ENCODE measurements at regions of chr1 and their contacts with region 1.

Region 1: GRCh38 chr1:203304919-203305808 is at the start of gene BTG2:
- DNase-seq: peak; percentile 84 to 97 (median 90)
- ATAC-seq: peak; percentile 78
- H3K4me3 ChIP-seq: peak within 1 kb of the TSS; percentile 73
- H3K4me3 Mint-ChIP-seq: peak within 1 kb of the TSS; percentile 95
- H3K27ac ChIP-seq: peak within 1 kb of the TSS; percentile 97 to 98
- H3K27ac Mint-ChIP-seq: peak within 1 kb of the TSS; percentile 98
- H3K4me1 ChIP-seq: peaks cover 54% of the 10 kb centered on the region
- H3K4me1 Mint-ChIP-seq: peaks cover 71% of the 10 kb centered on the region
- H3K27me3 ChIP-seq: no peaks in the 10 kb centered on the region
- H3K27me3 Mint-ChIP-seq: no peaks in the 10 kb centered on the region
- CTCF ChIP-seq: no peak
- total RNA-seq, gene BTG2: 802 to 849 TPM

Region 2: GRCh38 chr1:203290261-203291089 is 14.7 kb before region 1 on chr1:
- CTCF ChIA-PET with region 1: interaction called, 12 read pairs
- POLR2A ChIA-PET with region 1: interaction called, 514 read pairs
- intact Hi-C with region 1: loop called in 1 of 2 experiments (anchors 1 kb)
- DNase-seq: peak; percentile 95 to 99 (median 98)
- ATAC-seq: peak; percentile 55
- H3K4me3 ChIP-seq: peak overlapping the region; percentile 52
- H3K4me3 Mint-ChIP-seq: peak overlapping the region; percentile 88
- H3K27ac ChIP-seq: peak overlapping the region; percentile 99
- H3K27ac Mint-ChIP-seq: peak overlapping the region; percentile 100
- H3K4me1 ChIP-seq: peaks cover 63% of the 10 kb centered on the region
- H3K4me1 Mint-ChIP-seq: peaks cover 91% of the 10 kb centered on the region
- H3K27me3 ChIP-seq: no peaks in the 10 kb centered on the region
- H3K27me3 Mint-ChIP-seq: no peaks in the 10 kb centered on the region
- CTCF ChIP-seq: no peak

Region 3: DNA sequence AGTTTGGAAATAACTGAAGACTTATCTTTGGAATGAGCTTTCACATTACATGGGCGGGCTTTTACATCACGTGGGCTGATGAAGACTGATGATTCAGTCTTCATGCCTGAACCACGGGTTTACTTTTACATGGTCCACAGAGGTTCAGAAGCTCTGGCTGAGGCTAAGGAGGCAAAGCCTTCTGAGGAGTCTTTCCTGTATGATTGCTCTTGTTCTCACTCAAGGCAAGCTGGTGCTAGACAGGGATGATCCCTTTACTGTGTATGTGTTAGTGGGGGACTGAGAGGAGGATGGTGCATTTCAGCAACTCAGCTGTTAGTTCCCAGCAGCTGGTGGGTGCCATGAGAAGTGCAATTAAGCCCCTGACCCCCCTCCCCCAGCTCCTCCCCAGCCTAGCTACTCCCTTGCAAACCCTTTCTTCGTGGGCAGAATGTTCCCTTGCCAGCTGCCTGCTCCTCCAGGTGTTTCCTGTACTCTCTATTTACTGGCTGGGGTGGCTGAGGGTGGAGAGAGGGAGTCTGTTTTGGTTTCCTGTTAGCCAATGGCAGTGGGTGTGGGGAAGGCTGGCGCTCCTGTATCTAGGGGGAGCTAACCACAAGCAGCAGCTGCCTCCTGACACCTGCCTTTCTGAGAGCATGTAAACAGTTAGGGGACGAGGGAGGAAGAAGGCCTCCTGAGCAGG is 15.6 kb after region 1 on chr1:
- CTCF ChIA-PET with region 1: interaction called, 106 read pairs
- POLR2A ChIA-PET with region 1: interaction called, 868 read pairs
- intact Hi-C with region 1: loop called in 1 of 2 experiments (anchors 1 kb)
- DNase-seq: peak; percentile 47 to 95 (median 78)
- ATAC-seq: peak; percentile 70
- H3K4me3 ChIP-seq: peak overlapping the region; percentile 13
- H3K4me3 Mint-ChIP-seq: peak overlapping the region; percentile 82
- H3K27ac ChIP-seq: peak overlapping the region; percentile 98 to 99
- H3K27ac Mint-ChIP-seq: peak overlapping the region; percentile 92
- H3K4me1 ChIP-seq: peaks cover 82% of the 10 kb centered on the region
- H3K4me1 Mint-ChIP-seq: peaks cover 93% of the 10 kb centered on the region
- H3K27me3 ChIP-seq: no peaks in the 10 kb centered on the region
- H3K27me3 Mint-ChIP-seq: no peaks in the 10 kb centered on the region
- CTCF ChIP-seq: no peak

Region 4: GRCh38 chr1:203326830-203327683 is 21.9 kb after region 1 on chr1:
- CTCF ChIA-PET with region 1: interaction called, 106 read pairs
- POLR2A ChIA-PET with region 1: interaction called, 868 read pairs
- intact Hi-C with region 1: loop called (anchors 1 kb)
- DNase-seq: peak; percentile 89 to 97 (median 94)
- ATAC-seq: peak; percentile 65
- H3K4me3 ChIP-seq: peak overlapping the region; percentile 66
- H3K4me3 Mint-ChIP-seq: peak overlapping the region; percentile 81
- H3K27ac ChIP-seq: peak overlapping the region; percentile 98 to 99
- H3K27ac Mint-ChIP-seq: peak overlapping the region; percentile 92
- H3K4me1 ChIP-seq: peaks cover 67% of the 10 kb centered on the region
- H3K4me1 Mint-ChIP-seq: peaks cover 72% of the 10 kb centered on the region
- H3K27me3 ChIP-seq: no peaks in the 10 kb centered on the region
- H3K27me3 Mint-ChIP-seq: no peaks in the 10 kb centered on the region
- CTCF ChIP-seq: no peak